ENCODE measurements at regions of chr11 and their contacts with region 1.

Region 1: GRCh38 chr11:119728651-119729580 is at the start of gene NECTIN1:
- DNase-seq: peak; percentile 80 to 82
- H3K4me3 ChIP-seq: peak within 1 kb of the TSS; percentile 93
- H3K27ac ChIP-seq: no peak within 1 kb of the TSS
- H3K4me1 ChIP-seq: peaks cover 21% of the 10 kb centered on the region
- H3K27me3 ChIP-seq: 0 out of 2 replicates have a peak, but pooled peaks cover 4% of the 10 kb centered on the region
- CTCF ChIP-seq: peak; percentile 99
- total RNA-seq, gene NECTIN1: 17.6 and 21.5 TPM in 2 replicates

Region 2: GRCh38 chr11:119666463-119667131 is 62.3 kb before region 1 on chr11:
- CTCF ChIA-PET with region 1: no interaction called
- POLR2A ChIA-PET with region 1: no interaction called
- intact Hi-C with region 1: loop called (anchors 1 kb)
- DNase-seq: peak; percentile 71 to 83
- H3K4me3 ChIP-seq: no peak overlapping the region
- H3K27ac ChIP-seq: no peak overlapping the region
- H3K4me1 ChIP-seq: no peaks in the 10 kb centered on the region
- H3K27me3 ChIP-seq: no peaks in the 10 kb centered on the region
- CTCF ChIP-seq: peak; percentile 98

Region 3: GRCh38 chr11:119684361-119685110 is 44.4 kb before region 1 on chr11:
- CTCF ChIA-PET with region 1: no interaction called
- POLR2A ChIA-PET with region 1: no interaction called
- intact Hi-C with region 1: loop called (anchors 5 kb)
- DNase-seq: peak; percentile 60 to 83
- H3K4me3 ChIP-seq: peak overlapping the region; percentile 32; the same call in 1 of the 2 replicates
- H3K27ac ChIP-seq: peak overlapping the region; percentile 92
- H3K4me1 ChIP-seq: peaks cover 62% of the 10 kb centered on the region
- H3K27me3 ChIP-seq: no peaks in the 10 kb centered on the region
- CTCF ChIP-seq: no peak

Region 4: GRCh38 chr11:119694334-119694733 is 34.6 kb before region 1 on chr11:
- CTCF ChIA-PET with region 1: interaction called, 3 read pairs
- POLR2A ChIA-PET with region 1: no interaction called
- intact Hi-C with region 1: loop called (anchors 2 kb)
- DNase-seq: peak; percentile 27 to 70
- H3K4me3 ChIP-seq: no peak overlapping the region
- H3K27ac ChIP-seq: peak overlapping the region; percentile 38; the same call in 1 of the 2 replicates
- H3K4me1 ChIP-seq: peaks cover 66% of the 10 kb centered on the region
- H3K27me3 ChIP-seq: no peaks in the 10 kb centered on the region
- CTCF ChIP-seq: peak; percentile 43; the same call in 1 of the 2 replicates

Region 5: GRCh38 chr11:119763071-119763728 is 34.3 kb after region 1 on chr11:
- CTCF ChIA-PET with region 1: interaction called, 17 read pairs
- POLR2A ChIA-PET with region 1: no interaction called
- intact Hi-C with region 1: no loop called
- DNase-seq: no peak
- H3K4me3 ChIP-seq: no peak overlapping the region
- H3K27ac ChIP-seq: no peak overlapping the region
- H3K4me1 ChIP-seq: peaks cover 13% of the 10 kb centered on the region
- H3K27me3 ChIP-seq: peaks cover 31% of the 10 kb centered on the region; the same call in 1 of the 2 replicates
- CTCF ChIP-seq: no peak